B cell (primary cell): ENCODE measurements at regions of chr3 and their contacts with region 1.

Region 1: DNA sequence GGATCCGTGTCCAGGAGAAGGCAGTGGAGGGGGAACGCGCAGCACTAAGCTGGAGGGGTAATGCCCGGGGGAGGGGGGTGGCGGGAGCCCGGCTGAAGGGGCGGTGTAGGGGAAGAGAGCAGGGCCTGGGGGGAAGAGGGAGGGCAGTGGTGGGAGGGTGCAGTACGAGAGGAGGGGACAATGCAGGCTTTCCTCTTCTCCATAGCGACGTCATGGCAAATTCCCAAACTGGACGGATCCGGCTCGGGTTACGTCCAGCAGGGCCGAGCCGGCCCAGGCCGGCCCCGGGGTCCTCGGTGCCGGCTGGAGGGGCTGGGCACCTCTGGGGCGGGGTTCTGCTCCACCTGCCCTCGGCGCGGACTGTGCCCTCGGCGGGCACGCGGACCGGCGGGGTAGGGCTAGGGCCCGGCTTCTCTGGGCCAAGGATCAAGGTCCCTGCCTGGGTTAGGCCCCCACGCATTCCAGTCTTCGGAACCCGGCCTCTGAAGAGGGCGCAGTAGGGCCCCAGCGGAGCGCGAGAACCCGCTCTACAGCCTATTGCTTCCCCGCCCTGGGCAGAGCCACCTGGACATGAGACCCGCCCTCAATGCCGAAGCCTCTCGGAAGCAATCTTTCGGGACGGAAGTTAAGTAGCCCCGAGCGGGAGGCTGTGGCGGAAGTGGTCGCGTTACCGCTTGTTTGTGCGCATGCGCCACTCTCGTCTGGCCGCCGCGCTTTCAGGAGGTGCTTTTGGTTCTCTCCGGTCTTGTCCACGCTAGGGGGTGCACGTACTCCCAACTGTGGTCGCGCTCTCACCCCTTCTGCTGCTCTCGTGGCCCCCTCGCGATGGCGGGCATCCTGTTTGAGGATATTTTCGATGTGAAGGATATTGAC is 1.4 kb downstream of the POLR2H start:
- DNase-seq: peak; percentile 98
- ATAC-seq: peak; percentile 84
- H3K4me3 ChIP-seq: peak overlapping the region; percentile 68 to 94 (median 76)
- H3K4me3 Mint-ChIP-seq: peak overlapping the region; percentile 90
- H3K27ac ChIP-seq: peak overlapping the region; percentile 79 to 86
- H3K27ac Mint-ChIP-seq: peak overlapping the region; percentile 94
- H3K4me1 ChIP-seq: peaks cover 9 to 17% of the 10 kb centered on the region in 2 donors
- H3K4me1 Mint-ChIP-seq: peaks cover 20% of the 10 kb centered on the region
- H3K27me3 ChIP-seq: no peaks in the 10 kb centered on the region
- H3K27me3 Mint-ChIP-seq: no peaks in the 10 kb centered on the region
- CTCF ChIP-seq: peak; percentile 69

Region 2: DNA sequence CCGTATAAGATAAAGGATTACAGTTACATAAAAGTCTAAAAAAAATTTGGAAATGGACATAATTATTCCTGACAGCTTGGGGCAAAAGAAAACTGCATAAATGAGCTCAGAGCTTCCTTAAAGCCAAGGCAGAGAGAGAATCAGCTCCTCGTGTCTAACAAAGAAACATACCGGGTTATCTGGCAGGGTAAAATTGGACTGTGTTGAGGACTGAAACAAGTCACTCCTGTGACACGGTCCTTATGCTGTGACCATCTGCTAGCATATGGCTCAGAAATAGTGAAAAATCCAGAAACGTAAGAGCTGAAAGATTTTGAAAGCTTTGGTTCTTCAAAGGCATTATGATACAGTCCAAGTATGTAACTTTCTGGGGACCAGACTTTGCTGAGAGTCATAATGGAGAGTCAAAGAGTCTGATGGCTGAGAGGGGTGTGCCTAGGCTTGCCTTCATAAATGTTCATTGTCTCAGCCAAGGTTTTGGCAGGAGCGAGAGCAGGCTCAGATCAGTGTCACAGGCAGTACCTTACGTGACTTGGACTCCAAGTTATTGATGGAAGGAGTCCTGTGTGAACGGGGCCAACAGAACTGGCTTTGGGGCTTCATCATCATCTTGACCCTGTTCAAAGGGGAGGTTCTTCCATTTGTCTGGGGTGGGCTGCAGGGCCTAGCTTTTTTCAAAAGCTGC is 550.0 kb before region 1 on chr3:
- CTCF ChIA-PET with region 1: no interaction called
- POLR2A ChIA-PET with region 1: no interaction called
- intact Hi-C with region 1: no loop called
- DNase-seq: no peak
- ATAC-seq: no peak
- H3K4me3 ChIP-seq: no peak overlapping the region
- H3K4me3 Mint-ChIP-seq: no peak overlapping the region
- H3K27ac ChIP-seq: no peak overlapping the region
- H3K27ac Mint-ChIP-seq: no peak overlapping the region
- H3K4me1 ChIP-seq: no peaks in the 10 kb centered on the region
- H3K4me1 Mint-ChIP-seq: no peaks in the 10 kb centered on the region
- H3K27me3 ChIP-seq: no peaks in the 10 kb centered on the region
- H3K27me3 Mint-ChIP-seq: no peaks in the 10 kb centered on the region
- CTCF ChIP-seq: no peak

Region 3: DNA sequence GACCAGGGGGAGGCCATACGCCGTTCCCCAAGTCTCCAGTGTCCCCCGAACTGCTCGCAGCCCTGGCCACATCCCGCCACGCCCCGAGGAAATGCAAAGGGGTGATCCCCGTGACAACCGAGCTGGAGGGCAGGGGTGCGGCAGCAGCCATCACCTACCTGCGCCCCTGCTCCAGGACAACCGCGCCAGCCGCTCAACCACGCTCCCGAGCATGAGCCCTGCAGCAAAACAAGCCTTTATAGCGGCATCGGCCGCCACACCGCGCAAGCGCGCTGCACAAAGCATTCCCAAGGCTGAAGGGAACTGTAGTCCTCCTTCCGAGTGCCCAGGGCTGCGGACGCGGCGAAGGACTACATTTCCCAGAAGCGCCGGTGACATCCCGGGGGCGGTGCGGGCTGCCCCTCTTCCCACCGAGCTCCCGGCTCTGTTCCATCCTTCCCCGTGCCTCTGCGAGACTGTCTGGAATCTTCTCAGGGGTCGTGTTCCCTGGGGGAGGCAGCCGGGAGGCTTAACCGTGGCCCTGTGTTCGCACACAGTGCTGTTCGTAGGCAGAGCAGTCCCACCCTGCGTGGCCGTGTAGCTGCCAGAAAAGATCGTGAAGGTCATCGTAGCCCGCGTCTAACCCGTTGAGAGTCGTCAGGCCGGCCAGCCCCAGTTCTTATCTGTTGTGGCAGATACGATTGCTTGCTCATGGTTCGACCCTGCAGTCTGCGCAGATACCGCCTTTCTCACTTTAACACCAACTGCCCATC is 345.1 kb before region 1 on chr3 and contains the start of gene ABCC5:
- CTCF ChIA-PET with region 1: no interaction called
- POLR2A ChIA-PET with region 1: no interaction called
- intact Hi-C with region 1: loop called (anchors 1 kb)
- DNase-seq: peak; percentile 89
- ATAC-seq: peak; percentile 96
- H3K4me3 ChIP-seq: peak within 1 kb of the TSS; percentile 73 to 99 (median 93)
- H3K4me3 Mint-ChIP-seq: peak within 1 kb of the TSS; percentile 100
- H3K27ac ChIP-seq: peak within 1 kb of the TSS in 1 of 2 donors; percentile 10
- H3K27ac Mint-ChIP-seq: peak within 1 kb of the TSS; percentile 94
- H3K4me1 ChIP-seq: peaks cover 10 to 13% of the 10 kb centered on the region in 2 donors
- H3K4me1 Mint-ChIP-seq: peaks cover 20% of the 10 kb centered on the region
- H3K27me3 ChIP-seq: no peaks in the 10 kb centered on the region
- H3K27me3 Mint-ChIP-seq: peaks cover 15% of the 10 kb centered on the region
- CTCF ChIP-seq: peak; percentile 81
- total RNA-seq, gene ABCC5: 29.5 and 31.7 TPM in 2 replicates

Region 4: GRCh38 chr3:184185461-184186308 is 177.2 kb before region 1 on chr3 and contains the start of gene ABCF3:
- CTCF ChIA-PET with region 1: no interaction called
- POLR2A ChIA-PET with region 1: interaction called, 13 read pairs
- intact Hi-C with region 1: loop called (anchors 1 kb)
- DNase-seq: peak; percentile 100
- ATAC-seq: peak; percentile 94
- H3K4me3 ChIP-seq: peak within 1 kb of the TSS; percentile 70 to 100 (median 97)
- H3K4me3 Mint-ChIP-seq: peak within 1 kb of the TSS; percentile 99
- H3K27ac ChIP-seq: peak within 1 kb of the TSS; percentile 48 to 68
- H3K27ac Mint-ChIP-seq: peak within 1 kb of the TSS; percentile 94
- H3K4me1 ChIP-seq: peaks cover 17 to 21% of the 10 kb centered on the region in 2 donors
- H3K4me1 Mint-ChIP-seq: peaks cover 33% of the 10 kb centered on the region
- H3K27me3 ChIP-seq: no peaks in the 10 kb centered on the region
- H3K27me3 Mint-ChIP-seq: no peaks in the 10 kb centered on the region
- CTCF ChIP-seq: no peak
- total RNA-seq, gene ABCF3: 115 and 131 TPM in 2 replicates

Region 5: DNA sequence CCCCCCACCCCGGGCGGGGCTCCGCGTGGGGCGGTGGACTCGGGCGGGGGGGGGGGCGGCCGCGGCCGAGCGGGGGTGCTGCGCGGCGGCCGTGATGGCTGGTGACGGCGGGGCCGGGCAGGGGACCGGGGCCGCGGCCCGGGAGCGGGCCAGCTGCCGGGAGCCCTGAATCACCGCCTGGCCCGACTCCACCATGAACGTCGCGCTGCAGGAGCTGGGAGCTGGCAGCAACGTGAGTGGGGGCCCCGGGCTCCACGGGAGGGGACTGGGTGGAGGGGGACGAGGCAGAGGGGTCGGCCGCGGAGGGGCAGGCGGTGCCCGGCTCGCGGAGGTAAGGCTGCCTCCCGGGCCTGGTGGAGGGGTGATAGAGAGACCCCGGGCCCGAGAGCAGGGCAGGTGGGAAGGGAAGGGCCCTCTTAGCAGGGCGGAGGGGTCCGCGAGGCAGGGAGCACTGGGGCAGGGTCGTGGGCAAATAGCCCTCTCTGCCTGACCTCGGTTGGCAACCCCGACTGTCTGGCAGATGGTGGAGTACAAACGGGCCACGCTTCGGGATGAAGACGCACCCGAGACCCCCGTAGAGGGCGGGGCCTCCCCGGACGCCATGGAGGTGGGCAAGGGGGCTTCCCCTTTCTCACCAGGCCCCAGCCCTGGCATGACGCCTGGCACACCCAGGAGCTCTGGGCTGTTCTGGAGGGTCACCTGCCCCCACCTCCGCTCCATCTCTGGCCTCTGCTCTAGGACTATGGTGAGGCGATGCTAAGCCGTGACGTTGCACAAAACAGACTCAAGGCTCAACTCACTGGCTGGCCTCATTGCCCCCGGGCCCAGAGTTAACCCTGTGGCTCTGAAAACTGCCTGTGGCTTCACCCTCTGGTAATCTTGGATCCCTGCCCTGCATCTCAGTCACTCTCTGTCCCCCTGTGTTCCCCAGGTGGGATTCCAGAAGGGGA is 86.7 kb before region 1 on chr3 and contains the start of gene ECE2:
- CTCF ChIA-PET with region 1: no interaction called
- POLR2A ChIA-PET with region 1: no interaction called
- intact Hi-C with region 1: no loop called
- DNase-seq: peak; percentile 3
- ATAC-seq: no peak
- H3K4me3 ChIP-seq: no peak within 1 kb of the TSS
- H3K4me3 Mint-ChIP-seq: no peak within 1 kb of the TSS
- H3K27ac ChIP-seq: no peak within 1 kb of the TSS
- H3K27ac Mint-ChIP-seq: no peak within 1 kb of the TSS
- H3K4me1 ChIP-seq: peaks cover 0 to 5% of the 10 kb centered on the region in 2 donors
- H3K4me1 Mint-ChIP-seq: peaks cover 4% of the 10 kb centered on the region
- H3K27me3 ChIP-seq: peaks cover 0 to 44% (median 17%) of the 10 kb centered on the region in 4 experiments
- H3K27me3 Mint-ChIP-seq: peaks cover 60% of the 10 kb centered on the region
- CTCF ChIP-seq: no peak
- total RNA-seq, gene ECE2: not detected in 2 replicates

Region 6: GRCh38 chr3:184314363-184314699 is 48.6 kb before region 1 on chr3 and contains the start of gene EIF4G1:
- CTCF ChIA-PET with region 1: no interaction called
- POLR2A ChIA-PET with region 1: interaction called, 9 read pairs
- intact Hi-C with region 1: loop called (anchors 1 kb)
- DNase-seq: peak; percentile 96
- ATAC-seq: peak; percentile 90
- H3K4me3 ChIP-seq: peak within 1 kb of the TSS; percentile 43 to 71 (median 61)
- H3K4me3 Mint-ChIP-seq: peak within 1 kb of the TSS; percentile 90
- H3K27ac ChIP-seq: peak within 1 kb of the TSS; percentile 73 to 89
- H3K27ac Mint-ChIP-seq: peak within 1 kb of the TSS; percentile 88
- H3K4me1 ChIP-seq: peaks cover 13 to 23% of the 10 kb centered on the region in 2 donors
- H3K4me1 Mint-ChIP-seq: peaks cover 31% of the 10 kb centered on the region
- H3K27me3 ChIP-seq: no peaks in the 10 kb centered on the region
- H3K27me3 Mint-ChIP-seq: no peaks in the 10 kb centered on the region
- CTCF ChIP-seq: no peak
- total RNA-seq, gene EIF4G1: 160 TPM in 2 replicates

Region 7: GRCh38 chr3:184379358-184380188 is 16.7 kb after region 1 on chr3 and contains the start of gene CHRD:
- CTCF ChIA-PET with region 1: no interaction called
- POLR2A ChIA-PET with region 1: no interaction called
- intact Hi-C with region 1: no loop called
- DNase-seq: no peak
- ATAC-seq: no peak
- H3K4me3 ChIP-seq: peak within 1 kb of the TSS in 4 of 5 experiments; percentile 26 to 48 (median 33)
- H3K4me3 Mint-ChIP-seq: peak within 1 kb of the TSS; percentile 79
- H3K27ac ChIP-seq: no peak within 1 kb of the TSS
- H3K27ac Mint-ChIP-seq: no peak within 1 kb of the TSS
- H3K4me1 ChIP-seq: peaks cover 13 to 15% of the 10 kb centered on the region in 2 donors
- H3K4me1 Mint-ChIP-seq: peaks cover 18% of the 10 kb centered on the region
- H3K27me3 ChIP-seq: peaks cover 0 to 68% (median 25%) of the 10 kb centered on the region in 4 experiments
- H3K27me3 Mint-ChIP-seq: peaks cover 63% of the 10 kb centered on the region
- CTCF ChIP-seq: no peak
- total RNA-seq, gene CHRD: not detected in 2 replicates

Region 8: GRCh38 chr3:184561061-184561912 is 198.4 kb after region 1 on chr3 and contains the start of gene EPHB3:
- CTCF ChIA-PET with region 1: interaction called, 4 read pairs
- POLR2A ChIA-PET with region 1: no interaction called
- intact Hi-C with region 1: loop called (anchors 1 kb)
- DNase-seq: peak; percentile 96
- ATAC-seq: peak; percentile 89
- H3K4me3 ChIP-seq: peak within 1 kb of the TSS; percentile 41 to 67 (median 52)
- H3K4me3 Mint-ChIP-seq: peak within 1 kb of the TSS; percentile 88
- H3K27ac ChIP-seq: no peak within 1 kb of the TSS
- H3K27ac Mint-ChIP-seq: no peak within 1 kb of the TSS
- H3K4me1 ChIP-seq: peaks cover 19 to 22% of the 10 kb centered on the region in 2 donors
- H3K4me1 Mint-ChIP-seq: peaks cover 15% of the 10 kb centered on the region
- H3K27me3 ChIP-seq: peaks cover 0 to 53% (median 37%) of the 10 kb centered on the region in 4 experiments
- H3K27me3 Mint-ChIP-seq: peaks cover 35% of the 10 kb centered on the region
- CTCF ChIP-seq: peak; percentile 99
- total RNA-seq, gene EPHB3: 0.07 TPM in 1 of 2 replicates, not detected in the other

Region 9: GRCh38 chr3:184740524-184741484 is 377.9 kb after region 1 on chr3:
- CTCF ChIA-PET with region 1: no interaction called
- POLR2A ChIA-PET with region 1: no interaction called
- intact Hi-C with region 1: no loop called
- DNase-seq: no peak
- ATAC-seq: no peak
- H3K4me3 ChIP-seq: no peak overlapping the region
- H3K4me3 Mint-ChIP-seq: no peak overlapping the region
- H3K27ac ChIP-seq: no peak overlapping the region
- H3K27ac Mint-ChIP-seq: no peak overlapping the region
- H3K4me1 ChIP-seq: no peaks in the 10 kb centered on the region
- H3K4me1 Mint-ChIP-seq: no peaks in the 10 kb centered on the region
- H3K27me3 ChIP-seq: peaks cover 0 to 3% (median 0%) of the 10 kb centered on the region in 4 experiments
- H3K27me3 Mint-ChIP-seq: peaks cover 6% of the 10 kb centered on the region
- CTCF ChIP-seq: no peak

Region 10: GRCh38 chr3:185937689-185938463 is 1575.0 kb after region 1 on chr3 and contains the start of gene TRA2B:
- CTCF ChIA-PET with region 1: no interaction called
- POLR2A ChIA-PET with region 1: no interaction called
- intact Hi-C with region 1: loop called (anchors 5 kb)
- DNase-seq: peak; percentile 99
- ATAC-seq: peak; percentile 89
- H3K4me3 ChIP-seq: peak within 1 kb of the TSS; percentile 99 to 100 (median 100)
- H3K4me3 Mint-ChIP-seq: peak within 1 kb of the TSS; percentile 99
- H3K27ac ChIP-seq: peak within 1 kb of the TSS; percentile 99 to 100
- H3K27ac Mint-ChIP-seq: peak within 1 kb of the TSS; percentile 100
- H3K4me1 ChIP-seq: peaks cover 26 to 28% of the 10 kb centered on the region in 2 donors
- H3K4me1 Mint-ChIP-seq: peaks cover 39% of the 10 kb centered on the region
- H3K27me3 ChIP-seq: no peaks in the 10 kb centered on the region
- H3K27me3 Mint-ChIP-seq: no peaks in the 10 kb centered on the region
- CTCF ChIP-seq: peak; percentile 51
- total RNA-seq, gene TRA2B: 218 and 220 TPM in 2 replicates